H1 (cell line): ENCODE measurements at regions of chr15 and their contacts with region 1.

Region 1: GRCh38 chr15:63048115-63048775 is 5.7 kb downstream of the TPM1 start:
- DNase-seq: peak; percentile 90 to 98
- H3K4me3 ChIP-seq: peak overlapping the region; percentile 42 to 98 (median 69)
- H3K27ac ChIP-seq: peak overlapping the region; percentile 37; the same call in 1 of the 2 replicates
- H3K4me1 ChIP-seq: peaks cover 15 to 37% (median 23%) of the 10 kb centered on the region in 4 experiments
- H3K27me3 ChIP-seq: no peaks in the 10 kb centered on the region
- CTCF ChIP-seq: peak; percentile 82 to 93 (median 90)
- EP300 ChIP-seq: peak in 1 of 2 experiments; percentile 75; a peak in 1 of 3 replicates
- POLR2A ChIP-seq: peak; percentile 68 to 90
- RAD21 ChIP-seq: peak; percentile 70 to 78

Region 2: DNA sequence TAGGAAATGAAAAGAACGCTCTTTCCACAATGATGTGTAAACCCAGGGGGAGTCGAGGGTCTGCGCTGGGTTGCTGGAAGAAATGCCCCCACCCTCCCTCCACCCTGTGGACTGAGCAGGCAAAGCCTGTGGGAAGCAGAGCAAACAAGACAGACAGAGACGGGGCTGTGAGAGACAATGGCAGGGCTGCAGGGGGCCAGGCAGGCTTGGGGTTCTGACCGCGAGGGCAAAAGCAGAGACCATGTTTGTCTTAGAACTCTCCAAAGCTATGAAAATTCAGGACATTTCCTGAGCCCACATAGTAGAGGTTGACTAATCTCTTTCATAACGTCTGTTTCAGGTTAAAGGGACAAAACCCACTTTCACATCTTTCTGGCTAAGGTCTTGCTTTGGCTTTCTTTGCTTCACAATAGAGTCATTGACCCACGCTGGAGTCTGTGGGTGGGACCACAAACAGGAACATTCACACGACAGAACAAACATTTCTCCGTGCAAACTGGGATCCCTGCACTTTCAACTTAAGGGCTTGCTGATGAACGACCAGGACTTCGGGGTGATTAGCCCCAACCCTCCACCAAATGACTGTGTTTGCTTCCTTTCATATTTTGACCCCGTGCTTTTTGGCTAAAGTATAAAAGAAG is 161.7 kb before region 1 on chr15:
- CTCF ChIA-PET with region 1: interaction called, 6 read pairs
- POLR2A ChIA-PET with region 1: interaction called, 14 read pairs
- DNase-seq: peak in 1 of 2 experiments; percentile 63
- H3K4me3 ChIP-seq: peak overlapping the region in 1 of 4 experiments; percentile 42; a peak in 2 of 8 replicates
- H3K27ac ChIP-seq: no peak overlapping the region
- H3K4me1 ChIP-seq: peaks cover 2 to 22% (median 8%) of the 10 kb centered on the region in 4 experiments
- H3K27me3 ChIP-seq: no peaks in the 10 kb centered on the region
- CTCF ChIP-seq: no peak
- EP300 ChIP-seq: no peak
- POLR2A ChIP-seq: no peak
- RAD21 ChIP-seq: peak in 1 of 2 experiments; percentile 29; a peak in 1 of 4 replicates

Region 3: DNA sequence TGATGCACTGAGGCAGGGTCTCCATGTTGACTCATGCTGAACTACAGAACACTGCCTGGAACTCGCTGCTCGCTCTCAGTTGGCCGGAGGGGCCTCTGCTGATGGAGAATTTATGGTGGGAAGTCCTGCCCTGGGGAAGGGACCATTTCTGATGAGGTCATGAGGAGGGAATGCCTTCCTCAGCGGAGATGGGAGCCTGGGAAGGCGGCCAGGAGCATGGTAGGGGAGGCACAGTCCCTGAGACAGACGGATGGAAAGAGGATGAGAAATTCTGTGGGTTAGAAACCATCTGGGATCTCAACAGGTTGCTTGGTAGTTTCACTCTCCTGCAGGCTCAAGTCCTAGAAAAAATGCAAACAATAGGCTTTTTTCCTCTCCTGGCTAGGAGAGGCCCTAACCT is 62.5 kb before region 1 on chr15:
- CTCF ChIA-PET with region 1: interaction called, 6 read pairs
- POLR2A ChIA-PET with region 1: interaction called, 15 read pairs
- DNase-seq: no peak
- H3K4me3 ChIP-seq: no peak overlapping the region
- H3K27ac ChIP-seq: no peak overlapping the region
- H3K4me1 ChIP-seq: peaks cover 0 to 7% (median 1%) of the 10 kb centered on the region in 4 experiments; a peak in 3 of 7 replicates
- H3K27me3 ChIP-seq: no peaks in the 10 kb centered on the region
- CTCF ChIP-seq: no peak
- EP300 ChIP-seq: no peak
- POLR2A ChIP-seq: no peak
- RAD21 ChIP-seq: no peak

Region 4: GRCh38 chr15:63008333-63009049 is 39.8 kb before region 1 on chr15:
- CTCF ChIA-PET with region 1: interaction called, 9 read pairs
- POLR2A ChIA-PET with region 1: interaction called, 12 read pairs
- DNase-seq: no peak
- H3K4me3 ChIP-seq: no peak overlapping the region
- H3K27ac ChIP-seq: no peak overlapping the region
- H3K4me1 ChIP-seq: peaks cover 0 to 3% (median 1%) of the 10 kb centered on the region in 4 experiments; a peak in 3 of 7 replicates
- H3K27me3 ChIP-seq: no peaks in the 10 kb centered on the region
- CTCF ChIP-seq: no peak
- EP300 ChIP-seq: no peak
- POLR2A ChIP-seq: no peak
- RAD21 ChIP-seq: no peak

Region 5: DNA sequence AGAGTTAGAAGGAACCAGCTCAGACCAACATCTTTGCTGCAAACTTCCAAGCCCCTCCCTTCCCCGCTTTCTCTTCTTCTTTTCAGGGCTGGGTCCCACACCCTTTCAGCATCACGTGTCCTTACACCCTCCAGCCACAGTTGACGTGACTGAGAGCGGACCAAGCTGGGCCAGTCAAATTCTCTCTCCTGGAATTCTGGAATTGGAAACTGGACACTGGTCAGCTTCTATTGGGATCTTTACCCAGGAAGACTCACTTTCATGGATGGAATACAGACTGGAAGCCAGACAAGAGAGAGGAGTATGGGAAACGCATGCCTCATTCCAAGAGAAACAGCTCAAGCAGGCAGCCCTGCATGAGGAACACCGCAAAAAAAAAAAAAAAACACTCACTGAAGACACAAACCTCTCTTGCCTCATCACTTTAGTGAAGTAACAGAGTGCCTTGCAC is 18.1 kb before region 1 on chr15:
- CTCF ChIA-PET with region 1: interaction called, 20 read pairs
- POLR2A ChIA-PET with region 1: interaction called, 104 read pairs
- DNase-seq: no peak
- H3K4me3 ChIP-seq: no peak overlapping the region
- H3K27ac ChIP-seq: no peak overlapping the region
- H3K4me1 ChIP-seq: 0 out of 7 replicates have a peak, but pooled peaks cover 0 to 3% (median 0%) of the 10 kb centered on the region in 4 experiments
- H3K27me3 ChIP-seq: no peaks in the 10 kb centered on the region
- CTCF ChIP-seq: no peak
- EP300 ChIP-seq: no peak
- POLR2A ChIP-seq: no peak
- RAD21 ChIP-seq: no peak

Region 6: GRCh38 chr15:63073497-63074172 is 25.4 kb after region 1 on chr15:
- CTCF ChIA-PET with region 1: interaction called, 12 read pairs
- POLR2A ChIA-PET with region 1: interaction called, 635 read pairs
- DNase-seq: no peak
- H3K4me3 ChIP-seq: no peak overlapping the region
- H3K27ac ChIP-seq: no peak overlapping the region
- H3K4me1 ChIP-seq: peaks cover 15 to 27% (median 20%) of the 10 kb centered on the region in 4 experiments
- H3K27me3 ChIP-seq: no peaks in the 10 kb centered on the region
- CTCF ChIP-seq: no peak
- EP300 ChIP-seq: no peak
- POLR2A ChIP-seq: no peak
- RAD21 ChIP-seq: no peak

Region 7: GRCh38 chr15:63093486-63094205 is 45.4 kb after region 1 on chr15:
- CTCF ChIA-PET with region 1: interaction called, 32 read pairs
- POLR2A ChIA-PET with region 1: interaction called, 179 read pairs
- DNase-seq: peak; percentile 65 to 87
- H3K4me3 ChIP-seq: no peak overlapping the region
- H3K27ac ChIP-seq: no peak overlapping the region
- H3K4me1 ChIP-seq: peaks cover 4 to 9% (median 8%) of the 10 kb centered on the region in 4 experiments; a peak in 5 of 7 replicates
- H3K27me3 ChIP-seq: no peaks in the 10 kb centered on the region
- CTCF ChIP-seq: peak; percentile 87 to 95 (median 95)
- EP300 ChIP-seq: 0 out of 3 replicates have a peak, but pooled peaks of 1 of the 2 experiments have one; percentile 27
- POLR2A ChIP-seq: no peak
- RAD21 ChIP-seq: peak; percentile 98 to 99